Caco-2 (cell line): ENCODE measurements at regions of chrX and their contacts with region 1.

Region 1: DNA sequence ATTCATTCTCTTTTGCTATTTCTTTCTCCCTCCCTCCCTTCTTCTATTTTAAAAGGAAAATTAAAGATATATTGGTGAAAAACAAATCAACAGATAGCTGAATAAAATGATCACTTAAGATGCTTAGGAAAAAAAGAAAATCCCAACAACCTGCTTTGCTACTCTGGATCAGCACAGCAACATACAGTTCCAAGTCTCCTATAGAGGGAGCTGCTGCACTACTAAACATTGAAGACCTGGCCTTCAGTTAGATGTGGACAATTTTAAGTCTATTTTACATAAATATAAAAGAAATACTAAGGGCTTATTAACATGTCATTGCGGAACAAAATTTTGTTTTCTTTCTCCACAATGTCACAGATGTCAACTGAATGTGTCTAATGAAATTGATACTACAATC is 226.4 kb downstream of the MAGEB5 start:
- DNase-seq: peak in 1 of 2 experiments; percentile 38
- H3K4me3 ChIP-seq: no peak overlapping the region
- H3K4me3 Mint-ChIP-seq: no peak overlapping the region
- H3K27ac Mint-ChIP-seq: no peak overlapping the region
- H3K4me1 ChIP-seq: no peaks in the 10 kb centered on the region
- H3K4me1 Mint-ChIP-seq: no peaks in the 10 kb centered on the region
- H3K27me3 ChIP-seq: no peaks in the 10 kb centered on the region
- H3K27me3 Mint-ChIP-seq: no peaks in the 10 kb centered on the region
- CTCF ChIP-seq: peak in 1 of 2 experiments; percentile 58

Region 2: DNA sequence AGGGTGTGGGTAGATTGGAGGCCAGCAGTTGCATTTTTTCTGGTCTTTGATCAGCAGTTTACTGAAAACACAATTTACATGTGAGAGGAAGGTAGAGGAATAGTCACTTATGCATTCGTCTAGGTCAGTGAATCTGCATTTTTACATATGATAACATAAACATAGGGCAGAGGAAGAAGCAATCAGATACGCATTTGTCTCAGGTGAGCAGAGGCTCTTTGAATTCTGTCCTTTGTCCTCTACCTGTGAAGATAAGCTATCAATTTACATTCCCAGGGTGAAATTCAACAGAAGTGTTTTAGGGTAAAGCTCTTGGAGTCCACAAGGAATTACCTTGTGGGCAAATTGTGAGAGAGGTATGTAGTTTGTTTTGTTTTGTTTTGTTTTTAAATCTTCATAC is 80.2 kb after region 1 on chrX:
- CTCF ChIA-PET with region 1: no interaction called
- POLR2A ChIA-PET with region 1: no interaction called
- intact Hi-C with region 1: loop called (anchors 5 kb)
- DNase-seq: no peak
- H3K4me3 ChIP-seq: no peak overlapping the region
- H3K4me3 Mint-ChIP-seq: no peak overlapping the region
- H3K27ac Mint-ChIP-seq: peak overlapping the region; percentile 53
- H3K4me1 ChIP-seq: peaks cover 21% of the 10 kb centered on the region
- H3K4me1 Mint-ChIP-seq: peaks cover 11% of the 10 kb centered on the region
- H3K27me3 ChIP-seq: no peaks in the 10 kb centered on the region
- H3K27me3 Mint-ChIP-seq: no peaks in the 10 kb centered on the region
- CTCF ChIP-seq: no peak

Region 3: GRCh38 chrX:26613956-26614355 is 171.6 kb after region 1 on chrX:
- CTCF ChIA-PET with region 1: no interaction called
- POLR2A ChIA-PET with region 1: no interaction called
- intact Hi-C with region 1: loop called (anchors 10 kb)
- DNase-seq: no peak
- H3K4me3 ChIP-seq: no peak overlapping the region
- H3K4me3 Mint-ChIP-seq: no peak overlapping the region
- H3K27ac Mint-ChIP-seq: no peak overlapping the region
- H3K4me1 ChIP-seq: no peaks in the 10 kb centered on the region
- H3K4me1 Mint-ChIP-seq: no peaks in the 10 kb centered on the region
- H3K27me3 ChIP-seq: no peaks in the 10 kb centered on the region
- H3K27me3 Mint-ChIP-seq: peaks cover 2% of the 10 kb centered on the region
- CTCF ChIP-seq: no peak

Region 4: GRCh38 chrX:26651755-26652154 is 209.4 kb after region 1 on chrX:
- CTCF ChIA-PET with region 1: no interaction called
- POLR2A ChIA-PET with region 1: no interaction called
- intact Hi-C with region 1: loop called (anchors 1 kb)
- DNase-seq: no peak
- H3K4me3 ChIP-seq: no peak overlapping the region
- H3K4me3 Mint-ChIP-seq: no peak overlapping the region
- H3K27ac Mint-ChIP-seq: no peak overlapping the region
- H3K4me1 ChIP-seq: no peaks in the 10 kb centered on the region
- H3K4me1 Mint-ChIP-seq: no peaks in the 10 kb centered on the region
- H3K27me3 ChIP-seq: no peaks in the 10 kb centered on the region
- H3K27me3 Mint-ChIP-seq: peaks cover 2% of the 10 kb centered on the region
- CTCF ChIP-seq: no peak

Region 5: DNA sequence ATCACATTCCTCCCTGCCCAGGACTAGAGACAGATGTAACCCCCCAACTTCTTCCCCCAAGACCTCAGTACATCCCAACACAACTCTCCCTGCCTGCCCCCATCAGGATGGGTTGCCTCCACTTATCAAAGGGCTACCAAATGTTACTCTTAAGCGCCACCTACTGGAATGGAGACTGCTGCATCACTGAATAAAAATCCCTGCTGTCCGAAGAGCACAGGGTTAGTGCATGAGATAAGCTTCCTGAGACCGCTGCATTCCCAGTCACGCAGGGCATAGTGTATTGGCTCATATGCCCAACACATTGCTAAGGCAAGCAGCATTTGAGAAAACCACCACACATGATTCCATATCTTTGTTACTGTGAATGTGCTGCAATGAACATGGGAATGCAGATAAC is 476.3 kb after region 1 on chrX:
- CTCF ChIA-PET with region 1: no interaction called
- POLR2A ChIA-PET with region 1: no interaction called
- intact Hi-C with region 1: loop called (anchors 2 kb)
- DNase-seq: peak; percentile 21 to 42
- H3K4me3 ChIP-seq: no peak overlapping the region
- H3K4me3 Mint-ChIP-seq: no peak overlapping the region
- H3K27ac Mint-ChIP-seq: no peak overlapping the region
- H3K4me1 ChIP-seq: no peaks in the 10 kb centered on the region
- H3K4me1 Mint-ChIP-seq: no peaks in the 10 kb centered on the region
- H3K27me3 ChIP-seq: no peaks in the 10 kb centered on the region
- H3K27me3 Mint-ChIP-seq: no peaks in the 10 kb centered on the region
- CTCF ChIP-seq: peak in 1 of 2 experiments; percentile 24

Region 6: DNA sequence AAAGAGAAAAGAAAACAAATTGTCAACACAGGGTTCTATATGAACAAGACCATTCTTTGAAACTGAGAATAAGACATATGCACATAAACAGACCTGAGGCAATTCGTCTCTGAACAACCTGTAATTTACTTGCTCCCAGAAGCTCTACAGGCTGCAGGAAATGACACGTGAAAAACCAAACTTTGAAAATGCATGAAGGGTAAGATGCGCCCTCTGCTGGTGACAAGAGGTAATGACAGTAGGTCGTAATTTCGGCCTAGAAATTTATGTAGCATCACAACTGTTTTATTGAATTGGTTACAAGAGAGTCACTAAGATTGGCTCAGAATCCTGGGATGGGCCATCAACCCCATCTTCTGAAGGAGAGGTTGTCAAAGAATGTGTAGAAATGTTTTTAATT is 744.3 kb after region 1 on chrX:
- CTCF ChIA-PET with region 1: no interaction called
- POLR2A ChIA-PET with region 1: no interaction called
- intact Hi-C with region 1: loop called (anchors 10 kb)
- DNase-seq: peak in 1 of 2 experiments; percentile 35
- H3K4me3 ChIP-seq: no peak overlapping the region
- H3K4me3 Mint-ChIP-seq: no peak overlapping the region
- H3K27ac Mint-ChIP-seq: no peak overlapping the region
- H3K4me1 ChIP-seq: no peaks in the 10 kb centered on the region
- H3K4me1 Mint-ChIP-seq: no peaks in the 10 kb centered on the region
- H3K27me3 ChIP-seq: no peaks in the 10 kb centered on the region
- H3K27me3 Mint-ChIP-seq: no peaks in the 10 kb centered on the region
- CTCF ChIP-seq: peak; percentile 47